H1 (cell line): ENCODE measurements at regions of chr18 and their contacts with region 1.

Region 1: DNA sequence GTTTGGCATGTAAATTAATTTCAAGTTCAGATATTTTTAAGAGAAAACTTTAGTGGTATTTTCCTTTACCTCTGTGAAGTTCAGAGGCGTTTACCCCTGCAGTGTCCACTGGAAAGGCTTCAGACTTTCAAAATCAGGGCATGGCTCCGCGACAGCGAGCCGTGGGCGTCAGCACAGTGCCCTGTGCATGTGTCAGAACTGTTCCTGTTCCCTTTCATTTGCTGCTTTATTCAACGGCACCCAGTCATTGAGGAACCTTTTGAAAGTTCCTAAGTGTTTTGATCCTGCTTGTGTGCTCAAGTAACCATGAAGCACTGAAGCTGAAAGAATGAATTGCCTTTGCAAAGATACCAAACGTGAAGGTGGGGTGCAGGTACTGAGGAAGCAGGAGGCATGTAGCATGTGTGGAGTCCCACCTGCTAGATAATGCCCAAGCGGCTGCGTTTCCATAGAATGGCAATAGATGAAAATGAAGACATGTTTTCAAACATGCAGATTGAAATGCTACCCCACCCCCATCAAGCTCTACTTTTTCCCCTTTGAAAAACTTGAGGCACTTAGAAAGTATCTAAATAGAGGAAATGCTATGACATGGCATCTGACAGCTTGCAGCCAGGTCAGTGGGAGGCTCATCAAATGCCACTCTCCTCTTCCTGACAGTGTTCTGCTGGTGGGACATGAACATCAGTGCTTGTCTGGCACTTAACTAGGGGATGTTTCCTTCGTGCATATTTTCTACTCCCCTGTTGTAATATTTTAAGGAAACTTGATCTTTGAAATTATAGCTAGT is 148.6 kb downstream of the ZNF236 start:
- DNase-seq: no peak
- H3K4me3 ChIP-seq: no peak overlapping the region
- H3K27ac ChIP-seq: no peak overlapping the region
- H3K4me1 ChIP-seq: peaks cover 4 to 30% (median 15%) of the 10 kb centered on the region in 4 experiments
- H3K27me3 ChIP-seq: no peaks in the 10 kb centered on the region
- CTCF ChIP-seq: no peak
- EP300 ChIP-seq: no peak
- POLR2A ChIP-seq: no peak
- RAD21 ChIP-seq: no peak

Region 2: GRCh38 chr18:76958692-76959341 is 12.1 kb before region 1 on chr18:
- CTCF ChIA-PET with region 1: interaction called, 188 read pairs
- POLR2A ChIA-PET with region 1: interaction called, 11 read pairs
- DNase-seq: no peak
- H3K4me3 ChIP-seq: no peak overlapping the region
- H3K27ac ChIP-seq: no peak overlapping the region
- H3K4me1 ChIP-seq: 0 out of 7 replicates have a peak, but pooled peaks cover 0 to 2% (median 0%) of the 10 kb centered on the region in 4 experiments
- H3K27me3 ChIP-seq: no peaks in the 10 kb centered on the region
- CTCF ChIP-seq: no peak
- EP300 ChIP-seq: no peak
- POLR2A ChIP-seq: no peak
- RAD21 ChIP-seq: no peak

Region 3: GRCh38 chr18:77132371-77133050 is 161.5 kb after region 1 on chr18 and contains the start of gene MBP:
- CTCF ChIA-PET with region 1: no interaction called
- POLR2A ChIA-PET with region 1: no interaction called
- DNase-seq: peak in 1 of 2 experiments; percentile 91
- H3K4me3 ChIP-seq: peak within 1 kb of the TSS; percentile 44 to 84 (median 60)
- H3K27ac ChIP-seq: no peak within 1 kb of the TSS
- H3K4me1 ChIP-seq: peaks cover 0 to 12% (median 5%) of the 10 kb centered on the region in 4 experiments; a peak in 3 of 7 replicates
- H3K27me3 ChIP-seq: peaks cover 4 to 40% (median 27%) of the 10 kb centered on the region in 4 experiments; a peak in 6 of 7 replicates
- CTCF ChIP-seq: no peak
- EP300 ChIP-seq: no peak
- POLR2A ChIP-seq: peak in 1 of 2 experiments; percentile 51; a peak in 2 of 3 replicates
- RAD21 ChIP-seq: no peak
- total RNA-seq, gene MBP: 19.2 and 19.3 TPM in 2 replicates